ENCODE measurements at regions of chr17 and their contacts with region 1.

Region 1: DNA sequence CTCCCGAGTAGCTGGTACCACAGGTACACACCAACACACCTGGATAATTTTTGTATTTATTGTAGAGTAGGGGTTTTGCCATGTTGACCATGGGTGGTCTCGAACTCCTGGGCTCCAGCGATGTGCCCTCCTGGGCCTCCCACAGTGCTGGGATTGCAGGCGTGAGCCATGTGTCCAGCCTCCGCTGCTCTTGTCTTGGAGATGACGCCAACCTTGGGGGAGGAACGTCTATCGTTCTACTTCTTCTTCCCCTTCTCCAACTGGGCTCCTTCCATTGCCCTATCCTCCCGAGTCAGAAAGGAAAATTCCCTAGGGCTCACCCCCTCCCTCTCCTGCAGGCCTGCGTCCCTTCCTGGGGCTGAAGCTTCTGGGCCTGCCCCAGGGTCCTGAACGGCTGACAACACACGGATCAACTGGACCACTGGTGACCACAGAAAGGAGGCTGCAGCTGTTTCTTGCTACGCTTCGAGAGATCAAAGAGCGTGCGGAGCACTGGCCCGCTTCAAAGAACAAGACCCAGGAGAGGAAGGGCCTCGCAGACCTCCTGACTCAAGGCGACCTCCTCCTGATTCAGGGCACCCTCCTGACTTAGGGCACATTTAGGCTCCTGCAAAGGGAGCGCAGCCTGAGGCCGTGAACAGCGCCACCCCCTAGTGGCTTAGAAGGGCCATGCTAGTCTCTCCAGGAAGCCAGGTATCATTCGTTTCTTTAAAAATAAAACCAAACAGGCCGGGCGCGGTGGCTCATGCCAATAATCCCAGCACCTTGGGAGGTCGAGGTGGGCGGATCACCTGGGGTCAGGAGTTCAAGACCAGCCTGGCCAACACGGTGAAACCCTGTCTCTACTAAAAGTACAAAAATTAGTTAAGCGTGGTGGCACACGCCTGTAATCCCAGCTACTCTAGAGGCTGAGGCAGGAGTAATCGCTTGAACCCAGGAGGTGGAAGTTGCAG is 48.5 kb upstream of the HELZ start:
- DNase-seq: peak; percentile 82
- ATAC-seq: peak; percentile 56

Region 2: GRCh38 chr17:67171560-67171959 is 122.0 kb before region 1 on chr17:
- intact Hi-C with region 1: no loop called
- DNase-seq: no peak
- ATAC-seq: no peak

Region 3: GRCh38 chr17:67223924-67224323 is 69.6 kb before region 1 on chr17:
- intact Hi-C with region 1: loop called (anchors 2 kb)
- DNase-seq: no peak
- ATAC-seq: no peak

Region 4: DNA sequence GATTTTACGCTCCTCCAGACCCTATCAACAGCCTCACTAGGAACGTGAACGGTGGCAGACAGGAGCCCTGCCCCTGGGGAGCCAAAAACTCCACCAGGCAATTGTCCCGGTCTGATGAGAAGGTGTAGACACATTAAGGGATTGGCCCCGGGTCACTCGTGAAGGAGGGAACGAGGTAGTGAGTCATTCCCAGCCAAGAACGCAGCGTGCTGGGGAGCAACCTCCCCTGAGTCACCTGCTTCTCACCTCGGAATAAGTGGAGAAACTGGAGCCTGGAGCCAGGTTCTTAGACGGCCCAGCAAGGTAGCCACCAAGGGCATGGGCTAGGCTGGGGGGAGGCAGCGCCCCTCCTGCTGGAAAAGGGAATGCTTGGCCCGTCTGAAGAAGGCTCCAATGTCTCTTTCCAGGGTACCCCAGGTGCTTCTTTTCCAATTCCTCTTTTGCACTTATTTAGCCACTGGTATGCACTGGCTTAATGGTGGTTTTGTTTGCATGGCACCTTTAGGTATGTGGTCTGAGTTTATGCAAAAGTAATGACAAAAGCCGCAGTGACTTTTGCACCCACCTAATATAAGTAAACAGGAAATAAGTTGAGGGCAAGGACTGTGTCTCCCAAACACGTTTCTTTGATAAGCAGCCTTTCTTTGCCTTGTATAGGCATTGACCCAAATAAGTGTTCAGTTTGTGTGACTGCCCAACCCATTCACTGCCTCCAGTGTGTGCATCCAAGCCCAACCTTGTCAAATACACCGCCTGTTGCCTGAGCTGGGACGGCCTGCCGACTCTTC is 46.7 kb before region 1 on chr17:
- intact Hi-C with region 1: no loop called
- DNase-seq: no peak
- ATAC-seq: no peak

Measured in Right ventricle myocardium inferior (tissue), 1 donor.